Adrenal gland (tissue), 19 donors: ENCODE measurements at regions of chr11 and their contacts with region 1.

Region 1: GRCh38 chr11:113274713-113275582 is 39.4 kb upstream of the TTC12 start:
- DNase-seq: peak in 2 of 7 donors; percentile 9 to 68
- H3K4me3 ChIP-seq: no peak overlapping the region
- H3K27ac ChIP-seq: no peak overlapping the region
- H3K4me1 ChIP-seq: no peaks in the 10 kb centered on the region
- H3K27me3 ChIP-seq: no peaks in the 10 kb centered on the region
- CTCF ChIP-seq: no peak
- POLR2A ChIP-seq: no peak

Region 2: GRCh38 chr11:113113801-113114706 is 160.9 kb before region 1 on chr11:
- intact Hi-C with region 1: loop called in 1 of 2 experiments (anchors 10 kb)
- DNase-seq: peak; percentile 63 to 87 (median 74)
- H3K4me3 ChIP-seq: no peak overlapping the region
- H3K27ac ChIP-seq: peak overlapping the region in 1 of 5 donors; percentile 1
- H3K4me1 ChIP-seq: peaks cover 16 to 49% of the 10 kb centered on the region in 2 donors
- H3K27me3 ChIP-seq: no peaks in the 10 kb centered on the region
- CTCF ChIP-seq: peak; percentile 40 to 89 (median 74)
- POLR2A ChIP-seq: no peak